ENCODE measurements at regions of chrX and their contacts with region 1.

Region 1: GRCh38 chrX:70960728-70961127 is 29.8 kb upstream of the SLC7A3 start:
- DNase-seq: peak; percentile 19
- ATAC-seq: no peak
- H3K4me3 ChIP-seq: no peak overlapping the region
- H3K27ac ChIP-seq: no peak overlapping the region
- H3K4me1 ChIP-seq: no peaks in the 10 kb centered on the region
- H3K27me3 ChIP-seq: peaks cover 16% of the 10 kb centered on the region
- CTCF ChIP-seq: peak; percentile 43

Region 2: GRCh38 chrX:70769659-70770232 is 191.0 kb before region 1 on chrX:
- CTCF ChIA-PET with region 1: no interaction called
- POLR2A ChIA-PET with region 1: no interaction called
- intact Hi-C with region 1: loop called (anchors 1 kb)
- DNase-seq: peak; percentile 43
- ATAC-seq: no peak
- H3K4me3 ChIP-seq: no peak overlapping the region
- H3K27ac ChIP-seq: no peak overlapping the region
- H3K4me1 ChIP-seq: no peaks in the 10 kb centered on the region
- H3K27me3 ChIP-seq: peaks cover 8% of the 10 kb centered on the region; the same call in 1 of the 2 replicates
- CTCF ChIP-seq: peak; percentile 61

Region 3: GRCh38 chrX:70834587-70834986 is 126.1 kb before region 1 on chrX:
- CTCF ChIA-PET with region 1: no interaction called
- POLR2A ChIA-PET with region 1: no interaction called
- intact Hi-C with region 1: no loop called
- DNase-seq: no peak
- ATAC-seq: no peak
- H3K4me3 ChIP-seq: no peak overlapping the region
- H3K27ac ChIP-seq: no peak overlapping the region
- H3K4me1 ChIP-seq: no peaks in the 10 kb centered on the region
- H3K27me3 ChIP-seq: no peaks in the 10 kb centered on the region
- CTCF ChIP-seq: no peak

Region 4: DNA sequence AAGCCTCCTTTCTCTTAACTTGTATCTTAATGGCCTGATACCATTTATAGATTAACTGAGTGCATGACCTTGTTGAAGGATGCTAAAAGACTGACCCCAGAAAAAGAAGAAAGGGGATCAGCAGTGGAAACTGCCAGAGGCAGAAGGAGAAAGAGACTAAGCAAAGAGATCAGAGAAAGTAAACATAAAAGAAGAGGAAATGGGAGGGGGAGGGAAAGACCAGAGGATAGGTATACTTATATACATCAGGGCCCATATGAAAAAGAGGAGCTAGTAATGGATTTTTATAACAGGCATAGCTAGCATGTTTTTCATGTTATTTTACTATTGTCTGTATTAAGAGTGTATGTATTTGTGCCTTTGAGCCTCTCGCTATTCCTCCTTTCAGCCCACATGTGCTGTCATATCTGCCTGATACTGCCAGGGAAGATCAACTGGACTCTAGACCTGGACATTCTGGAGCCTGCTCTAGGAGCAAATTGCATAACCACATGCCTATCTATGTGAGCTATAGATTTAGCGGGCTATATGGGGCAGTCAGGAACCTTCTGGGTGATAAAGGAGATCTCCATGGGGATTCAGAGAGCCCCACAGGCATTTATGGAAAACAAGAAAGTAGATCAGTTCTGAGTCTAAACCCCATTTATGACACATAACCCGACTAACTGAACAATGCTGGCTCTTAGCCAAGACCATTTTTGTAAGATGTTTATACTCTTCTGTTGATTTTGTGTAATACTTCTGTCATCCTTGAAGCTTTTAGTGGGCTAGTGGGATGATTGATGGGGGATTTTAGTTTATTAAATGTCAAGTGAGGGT is 120.8 kb after region 1 on chrX:
- CTCF ChIA-PET with region 1: no interaction called
- POLR2A ChIA-PET with region 1: no interaction called
- intact Hi-C with region 1: no loop called
- DNase-seq: peak; percentile 79
- ATAC-seq: peak; percentile 56
- H3K4me3 ChIP-seq: no peak overlapping the region
- H3K27ac ChIP-seq: no peak overlapping the region
- H3K4me1 ChIP-seq: peaks cover 14% of the 10 kb centered on the region
- H3K27me3 ChIP-seq: no peaks in the 10 kb centered on the region
- CTCF ChIP-seq: no peak

Measured in PC-3 (cell line).